CD4-positive, alpha-beta T cell (primary cell): ENCODE measurements at regions of chr11 and their contacts with region 1.

Region 1: DNA sequence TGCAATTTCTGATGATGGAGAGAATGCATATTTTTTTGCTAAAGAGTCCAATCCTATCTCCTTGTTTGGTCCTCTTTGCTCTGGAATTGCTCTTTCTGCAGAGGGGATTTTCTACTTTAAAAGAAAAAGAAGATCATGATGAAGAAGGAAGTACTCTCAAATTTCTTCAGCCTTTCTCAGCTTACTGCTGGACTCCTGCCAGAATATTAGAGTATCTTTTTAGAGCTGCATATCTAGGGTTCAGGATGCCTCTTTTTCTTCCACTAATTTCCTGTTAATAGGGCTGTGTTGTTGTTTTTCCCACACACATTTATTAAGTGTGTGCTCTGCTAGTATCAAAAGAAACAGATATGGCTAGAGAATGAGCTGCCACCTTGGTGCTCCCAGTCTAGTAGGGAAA is 18.2 kb downstream of the UBASH3B start:
- DNase-seq: no peak
- ATAC-seq: no peak
- H3K4me3 ChIP-seq: no peak overlapping the region
- H3K4me3 Mint-ChIP-seq: no peak overlapping the region
- H3K27ac ChIP-seq: peak overlapping the region in 1 of 2 donors; percentile 9
- H3K27ac Mint-ChIP-seq: peak overlapping the region; percentile 85
- H3K4me1 ChIP-seq: peaks cover 98% of the 10 kb centered on the region
- H3K4me1 Mint-ChIP-seq: peaks cover 83% of the 10 kb centered on the region
- H3K27me3 ChIP-seq: no peaks in the 10 kb centered on the region
- H3K27me3 Mint-ChIP-seq: no peaks in the 10 kb centered on the region
- CTCF ChIP-seq: no peak

Region 2: DNA sequence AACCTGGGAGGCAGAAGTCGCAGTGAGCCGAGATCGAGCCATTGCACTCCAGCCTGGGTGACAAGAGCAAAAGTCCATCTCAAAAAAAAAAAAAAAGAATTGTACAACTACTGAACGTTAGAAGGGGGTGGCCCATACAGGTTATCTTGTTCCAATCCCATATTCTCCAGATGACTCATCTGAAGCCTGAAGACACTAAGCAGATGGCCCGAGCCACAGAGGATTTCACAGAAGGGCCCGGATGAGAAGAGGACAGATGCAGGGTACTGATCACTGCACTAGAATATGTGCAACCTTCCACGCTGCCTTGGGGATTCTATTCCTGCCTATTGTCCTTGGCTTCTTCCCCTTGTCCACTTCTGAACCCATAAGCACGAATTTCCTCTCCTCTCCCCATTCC is 89.0 kb before region 1 on chr11:
- CTCF ChIA-PET with region 1: no interaction called
- POLR2A ChIA-PET with region 1: no interaction called
- intact Hi-C with region 1: no loop called
- DNase-seq: no peak
- ATAC-seq: no peak
- H3K4me3 ChIP-seq: no peak overlapping the region
- H3K4me3 Mint-ChIP-seq: no peak overlapping the region
- H3K27ac ChIP-seq: no peak overlapping the region
- H3K27ac Mint-ChIP-seq: no peak overlapping the region
- H3K4me1 ChIP-seq: peaks cover 8% of the 10 kb centered on the region
- H3K4me1 Mint-ChIP-seq: peaks cover 7% of the 10 kb centered on the region
- H3K27me3 ChIP-seq: peaks cover 4 to 6% of the 10 kb centered on the region in 2 experiments
- H3K27me3 Mint-ChIP-seq: no peaks in the 10 kb centered on the region
- CTCF ChIP-seq: no peak

Region 3: GRCh38 chr11:122601141-122602125 is 72.3 kb before region 1 on chr11:
- CTCF ChIA-PET with region 1: no interaction called
- POLR2A ChIA-PET with region 1: no interaction called
- intact Hi-C with region 1: no loop called
- DNase-seq: no peak
- ATAC-seq: no peak
- H3K4me3 ChIP-seq: no peak overlapping the region
- H3K4me3 Mint-ChIP-seq: no peak overlapping the region
- H3K27ac ChIP-seq: no peak overlapping the region
- H3K27ac Mint-ChIP-seq: no peak overlapping the region
- H3K4me1 ChIP-seq: no peaks in the 10 kb centered on the region
- H3K4me1 Mint-ChIP-seq: no peaks in the 10 kb centered on the region
- H3K27me3 ChIP-seq: peaks cover 2 to 7% of the 10 kb centered on the region in 2 experiments
- H3K27me3 Mint-ChIP-seq: peaks cover 4% of the 10 kb centered on the region
- CTCF ChIP-seq: no peak

Region 4: GRCh38 chr11:122690801-122691548 is 17.3 kb after region 1 on chr11:
- CTCF ChIA-PET with region 1: interaction called, 5 read pairs
- POLR2A ChIA-PET with region 1: interaction called, 91 read pairs
- intact Hi-C with region 1: loop called in 1 of 2 experiments (anchors 2 kb)
- DNase-seq: peak in 4 of 14 experiments; percentile 23 to 45 (median 40)
- ATAC-seq: peak; percentile 68
- H3K4me3 ChIP-seq: peak overlapping the region; percentile 34
- H3K4me3 Mint-ChIP-seq: peak overlapping the region; percentile 84
- H3K27ac ChIP-seq: peak overlapping the region; percentile 46 to 71
- H3K27ac Mint-ChIP-seq: peak overlapping the region; percentile 87
- H3K4me1 ChIP-seq: peaks cover 76% of the 10 kb centered on the region
- H3K4me1 Mint-ChIP-seq: peaks cover 84% of the 10 kb centered on the region
- H3K27me3 ChIP-seq: no peaks in the 10 kb centered on the region
- H3K27me3 Mint-ChIP-seq: no peaks in the 10 kb centered on the region
- CTCF ChIP-seq: no peak

Region 5: DNA sequence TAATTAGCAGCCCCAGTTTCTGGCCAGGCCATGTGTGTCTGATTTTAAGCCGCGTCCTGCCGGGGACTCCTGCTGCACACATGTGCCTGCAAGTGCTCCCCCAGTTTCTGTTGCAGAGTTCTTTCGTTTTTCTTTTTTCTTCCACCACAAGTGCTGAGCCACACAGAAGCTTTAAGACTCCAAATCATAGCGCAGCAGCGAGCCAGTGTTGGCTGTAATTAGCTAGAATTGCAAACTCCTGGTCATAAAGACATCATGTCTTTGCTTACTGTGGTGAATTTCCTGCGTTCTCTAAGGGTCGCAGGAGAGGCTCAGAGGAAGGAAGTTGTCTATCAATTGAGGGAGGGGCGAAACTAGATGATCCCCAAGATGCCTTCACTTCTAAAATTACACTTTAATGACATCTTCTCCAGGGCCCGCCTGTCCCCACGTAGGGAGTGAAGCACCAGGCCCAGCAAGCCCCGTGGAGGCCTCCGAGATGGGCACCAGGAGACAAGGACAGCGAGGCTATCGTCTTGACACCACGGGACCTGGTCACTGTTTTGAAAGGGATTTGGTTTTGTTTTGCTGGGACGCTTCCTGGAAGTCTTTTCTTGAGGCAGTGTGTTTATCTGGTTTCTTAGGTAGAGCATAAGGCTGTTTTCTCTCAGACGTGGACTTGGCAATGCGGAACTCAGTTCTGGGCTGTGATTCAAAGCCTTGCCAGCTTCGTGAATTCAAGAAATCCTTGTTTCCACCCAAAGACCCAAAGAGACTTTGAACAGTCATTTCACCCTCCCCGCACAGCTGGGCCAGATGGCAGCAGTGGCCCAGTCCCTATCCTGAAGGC is 53.6 kb after region 1 on chr11:
- CTCF ChIA-PET with region 1: no interaction called
- POLR2A ChIA-PET with region 1: interaction called, 30 read pairs
- intact Hi-C with region 1: no loop called
- DNase-seq: peak in 10 of 14 experiments; percentile 11 to 64 (median 41)
- ATAC-seq: peak; percentile 74
- H3K4me3 ChIP-seq: peak overlapping the region; percentile 41
- H3K4me3 Mint-ChIP-seq: peak overlapping the region; percentile 80
- H3K27ac ChIP-seq: peak overlapping the region; percentile 58 to 91
- H3K27ac Mint-ChIP-seq: peak overlapping the region; percentile 95
- H3K4me1 ChIP-seq: peaks cover 74% of the 10 kb centered on the region
- H3K4me1 Mint-ChIP-seq: peaks cover 57% of the 10 kb centered on the region
- H3K27me3 ChIP-seq: no peaks in the 10 kb centered on the region
- H3K27me3 Mint-ChIP-seq: no peaks in the 10 kb centered on the region
- CTCF ChIP-seq: no peak

Region 6: DNA sequence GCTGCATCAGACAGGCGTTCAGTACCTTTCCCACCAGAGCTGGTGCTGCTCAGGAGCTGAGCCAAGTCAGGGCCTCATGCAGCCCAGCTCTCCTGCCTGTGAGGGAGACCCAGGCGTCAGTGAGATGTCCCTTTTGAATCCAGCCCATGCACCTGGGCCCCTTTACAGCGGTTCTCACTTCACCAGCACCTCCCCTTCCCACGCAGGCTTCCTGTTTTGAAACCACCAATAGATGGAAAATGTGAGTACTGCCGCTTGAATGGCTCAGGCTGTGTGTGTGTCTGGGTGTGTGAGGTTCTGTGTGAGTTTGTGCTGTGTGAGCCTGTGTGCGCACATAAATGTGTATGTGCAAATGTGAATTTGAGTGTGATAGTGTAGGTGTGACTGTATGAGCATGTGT is 70.2 kb after region 1 on chr11:
- CTCF ChIA-PET with region 1: no interaction called
- POLR2A ChIA-PET with region 1: interaction called, 41 read pairs
- intact Hi-C with region 1: no loop called
- DNase-seq: peak; percentile 36 to 92 (median 70)
- ATAC-seq: peak; percentile 71
- H3K4me3 ChIP-seq: peak overlapping the region; percentile 34
- H3K4me3 Mint-ChIP-seq: no peak overlapping the region
- H3K27ac ChIP-seq: peak overlapping the region; percentile 66 to 71
- H3K27ac Mint-ChIP-seq: no peak overlapping the region
- H3K4me1 ChIP-seq: peaks cover 77% of the 10 kb centered on the region
- H3K4me1 Mint-ChIP-seq: peaks cover 36% of the 10 kb centered on the region
- H3K27me3 ChIP-seq: no peaks in the 10 kb centered on the region
- H3K27me3 Mint-ChIP-seq: no peaks in the 10 kb centered on the region
- CTCF ChIP-seq: no peak

Region 7: DNA sequence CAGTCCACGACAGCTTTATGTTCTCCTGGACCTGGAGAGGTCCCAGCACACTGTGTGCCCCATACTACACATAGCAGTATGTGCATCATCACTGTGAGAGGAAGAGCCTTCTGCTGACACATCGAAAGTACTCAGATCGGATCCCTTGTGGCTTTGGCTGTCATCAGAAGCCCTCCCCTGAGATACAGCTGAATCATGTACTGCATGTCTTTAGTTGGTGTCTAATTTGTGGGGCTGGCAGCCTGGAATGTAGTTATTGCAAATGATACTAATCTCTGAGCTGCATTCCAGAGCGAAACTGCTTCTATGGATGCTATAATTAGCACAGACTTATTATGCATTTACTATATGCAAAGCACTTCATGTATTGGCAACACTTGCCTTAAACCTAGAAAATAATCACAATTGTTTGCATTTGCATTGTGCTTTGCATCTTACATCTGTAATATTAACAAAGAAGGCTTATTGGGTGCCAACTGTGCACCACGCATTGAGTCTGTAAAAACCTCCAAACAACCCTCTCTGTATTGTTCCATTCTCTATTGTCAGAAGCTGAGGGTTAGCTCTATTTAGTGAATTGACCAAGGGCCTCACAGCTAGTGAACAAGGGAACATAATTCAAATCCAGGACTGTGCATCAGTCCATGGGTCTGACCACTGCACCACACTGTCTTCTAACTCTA is 75.4 kb after region 1 on chr11:
- CTCF ChIA-PET with region 1: interaction called, 3 read pairs
- POLR2A ChIA-PET with region 1: interaction called, 41 read pairs
- intact Hi-C with region 1: no loop called
- DNase-seq: peak in 13 of 14 experiments; percentile 11 to 80 (median 37)
- ATAC-seq: peak; percentile 42
- H3K4me3 ChIP-seq: no peak overlapping the region
- H3K4me3 Mint-ChIP-seq: no peak overlapping the region
- H3K27ac ChIP-seq: no peak overlapping the region
- H3K27ac Mint-ChIP-seq: no peak overlapping the region
- H3K4me1 ChIP-seq: peaks cover 68% of the 10 kb centered on the region
- H3K4me1 Mint-ChIP-seq: peaks cover 41% of the 10 kb centered on the region
- H3K27me3 ChIP-seq: no peaks in the 10 kb centered on the region
- H3K27me3 Mint-ChIP-seq: no peaks in the 10 kb centered on the region
- CTCF ChIP-seq: no peak

Region 8: DNA sequence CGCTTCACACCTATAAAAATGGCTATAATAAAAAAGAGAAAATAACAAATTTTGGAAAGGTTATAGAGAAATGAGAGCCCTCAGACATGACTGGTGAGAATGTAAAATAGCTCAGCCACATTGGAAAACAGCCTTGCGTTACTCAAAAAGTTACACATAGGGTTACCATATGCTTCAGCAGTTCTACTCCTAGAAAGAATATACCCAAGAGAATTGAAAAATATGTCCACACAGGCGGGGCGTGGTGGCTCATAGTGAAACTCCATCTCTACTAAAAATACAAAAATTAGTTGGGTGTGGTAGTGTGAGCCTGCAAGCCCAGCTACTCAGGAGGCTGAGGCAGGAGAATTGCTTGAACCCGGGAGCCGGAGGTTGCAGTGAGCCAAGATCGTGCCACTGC is 201.3 kb after region 1 on chr11:
- CTCF ChIA-PET with region 1: no interaction called
- POLR2A ChIA-PET with region 1: no interaction called
- intact Hi-C with region 1: no loop called
- DNase-seq: no peak
- ATAC-seq: no peak
- H3K4me3 ChIP-seq: no peak overlapping the region
- H3K4me3 Mint-ChIP-seq: no peak overlapping the region
- H3K27ac ChIP-seq: no peak overlapping the region
- H3K27ac Mint-ChIP-seq: no peak overlapping the region
- H3K4me1 ChIP-seq: no peaks in the 10 kb centered on the region
- H3K4me1 Mint-ChIP-seq: peaks cover 9% of the 10 kb centered on the region
- H3K27me3 ChIP-seq: no peaks in the 10 kb centered on the region
- H3K27me3 Mint-ChIP-seq: no peaks in the 10 kb centered on the region
- CTCF ChIP-seq: no peak